ENCODE measurements at regions of chr12 and their contacts with region 1.

Region 1: DNA sequence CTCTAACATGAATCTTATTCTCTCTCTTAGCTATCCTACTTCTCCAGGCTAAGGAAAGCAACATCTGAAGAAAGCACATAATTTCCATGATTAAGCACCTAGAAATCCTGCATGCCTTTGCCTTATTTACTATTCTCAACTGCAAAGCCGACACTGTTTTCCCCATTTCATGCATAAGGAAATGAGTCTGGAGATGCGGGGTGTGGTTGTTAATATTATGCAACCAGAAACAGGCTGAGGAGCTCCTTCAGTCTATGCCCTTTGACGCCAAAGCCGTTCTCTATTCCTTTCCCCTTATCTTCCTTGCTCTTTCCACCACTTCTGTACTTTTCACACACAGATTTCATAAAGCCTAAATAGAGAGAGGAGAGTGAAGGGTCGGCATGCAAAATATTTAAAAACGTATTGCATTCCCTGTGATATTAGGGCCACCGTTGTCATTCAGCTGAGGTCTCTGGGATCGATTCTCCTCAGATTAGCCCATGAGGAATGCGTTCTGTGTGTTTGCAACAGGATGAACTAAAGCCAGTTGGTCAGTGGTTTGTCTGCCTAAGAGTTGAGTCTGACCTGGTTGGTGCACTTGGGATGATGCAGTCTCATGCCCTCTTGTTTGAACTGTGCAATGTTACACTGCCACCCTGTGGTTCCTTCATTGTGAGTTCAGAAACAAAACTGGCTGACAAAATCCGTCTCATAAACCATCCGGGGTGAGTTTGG is 53.1 kb upstream of the PLEKHG7 start:
- DNase-seq: peak; percentile 75
- H3K4me3 Mint-ChIP-seq: no peak overlapping the region
- H3K27ac Mint-ChIP-seq: no peak overlapping the region
- H3K4me1 Mint-ChIP-seq: peaks cover 7% of the 10 kb centered on the region
- H3K27me3 Mint-ChIP-seq: peaks cover 2% of the 10 kb centered on the region

Region 2: GRCh38 chr12:91361864-91362263 is 1287.8 kb before region 1 on chr12:
- CTCF ChIA-PET with region 1: no interaction called
- intact Hi-C with region 1: loop called (anchors 1 kb)
- DNase-seq: no peak
- H3K4me3 Mint-ChIP-seq: no peak overlapping the region
- H3K27ac Mint-ChIP-seq: no peak overlapping the region
- H3K4me1 Mint-ChIP-seq: peaks cover 3% of the 10 kb centered on the region
- H3K27me3 Mint-ChIP-seq: no peaks in the 10 kb centered on the region

Region 3: DNA sequence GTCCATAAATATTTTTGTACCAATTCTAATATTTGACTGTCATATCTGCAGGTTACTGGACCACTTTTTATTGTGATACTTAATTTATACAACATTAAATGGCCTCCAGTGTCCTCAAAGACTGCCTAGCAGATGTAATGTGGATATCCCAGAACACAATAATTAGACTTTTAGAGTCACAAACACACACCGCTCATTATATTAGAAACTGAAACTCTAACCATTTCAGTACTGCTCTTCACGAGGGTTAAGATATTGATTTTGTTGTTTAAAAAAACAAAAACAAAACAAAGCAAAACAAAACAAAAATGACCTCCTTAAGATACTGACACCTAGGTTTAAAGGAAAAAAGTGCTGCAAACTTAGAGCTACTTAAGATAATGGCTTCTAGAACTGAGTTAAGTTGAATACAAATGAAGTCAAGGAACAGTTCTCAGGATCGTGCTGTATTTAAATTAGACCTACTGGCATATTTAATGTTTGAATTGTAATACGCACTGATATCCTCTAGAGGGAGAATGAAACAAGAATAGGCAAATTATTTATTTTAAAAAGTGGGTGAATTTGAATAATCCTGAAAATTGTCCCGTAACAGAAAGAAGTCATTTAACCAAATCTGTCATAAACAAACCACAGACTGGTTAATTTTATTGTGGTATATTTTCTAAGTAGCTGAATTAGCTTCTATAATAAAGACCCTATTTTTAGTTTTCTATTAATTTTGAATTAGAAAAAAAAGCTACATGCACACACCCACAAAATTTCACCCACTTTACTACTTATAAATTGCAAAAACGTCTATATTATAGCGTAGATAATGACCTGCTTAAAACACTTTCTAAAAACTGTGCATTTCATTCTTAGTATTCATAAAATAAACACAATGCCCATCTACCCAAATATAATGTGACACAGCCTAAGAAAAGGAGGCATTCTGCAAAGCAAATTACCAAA is 1071.8 kb before region 1 on chr12:
- CTCF ChIA-PET with region 1: no interaction called
- intact Hi-C with region 1: loop called (anchors 10 kb)
- DNase-seq: no peak
- H3K4me3 Mint-ChIP-seq: peak overlapping the region; percentile 71
- H3K27ac Mint-ChIP-seq: peak overlapping the region; percentile 61
- H3K4me1 Mint-ChIP-seq: peaks cover 19% of the 10 kb centered on the region
- H3K27me3 Mint-ChIP-seq: no peaks in the 10 kb centered on the region

Region 4: GRCh38 chr12:92272061-92272964 is 377.4 kb before region 1 on chr12:
- CTCF ChIA-PET with region 1: no interaction called
- intact Hi-C with region 1: no loop called
- DNase-seq: no peak
- H3K4me3 Mint-ChIP-seq: no peak overlapping the region
- H3K27ac Mint-ChIP-seq: no peak overlapping the region
- H3K4me1 Mint-ChIP-seq: peaks cover 11% of the 10 kb centered on the region
- H3K27me3 Mint-ChIP-seq: no peaks in the 10 kb centered on the region

Region 5: DNA sequence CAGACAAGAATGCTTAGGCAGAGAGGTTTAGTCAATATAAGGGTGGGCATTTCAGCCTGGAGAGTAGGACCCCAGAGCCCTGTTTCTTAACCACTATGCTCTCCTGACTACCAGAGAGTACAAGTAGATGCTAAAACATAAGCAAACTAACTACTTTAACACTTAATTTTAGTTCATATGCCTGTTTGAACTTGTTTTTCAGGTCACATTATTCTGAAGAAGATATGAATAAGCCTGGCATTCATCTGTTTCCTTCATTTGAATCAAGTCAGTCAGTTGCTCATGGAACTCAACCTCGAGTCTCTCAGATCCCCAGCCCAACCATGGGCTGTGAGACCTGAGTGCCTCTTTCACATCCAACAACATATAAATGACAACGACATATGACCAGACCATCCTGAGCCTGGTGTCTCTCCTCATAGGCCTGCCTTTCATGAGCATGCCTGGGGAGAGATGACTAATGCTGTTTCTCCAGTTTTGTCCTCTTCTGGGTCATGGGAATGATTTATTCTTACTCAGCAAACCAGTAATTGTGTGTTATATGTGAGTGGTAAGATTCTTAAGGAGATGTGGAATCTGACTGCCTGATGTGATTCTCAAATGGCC is 252.9 kb before region 1 on chr12:
- CTCF ChIA-PET with region 1: no interaction called
- intact Hi-C with region 1: loop called (anchors 1 kb)
- DNase-seq: peak; percentile 39
- H3K4me3 Mint-ChIP-seq: no peak overlapping the region
- H3K27ac Mint-ChIP-seq: peak overlapping the region; percentile 73
- H3K4me1 Mint-ChIP-seq: peaks cover 97% of the 10 kb centered on the region
- H3K27me3 Mint-ChIP-seq: no peaks in the 10 kb centered on the region

Region 6: DNA sequence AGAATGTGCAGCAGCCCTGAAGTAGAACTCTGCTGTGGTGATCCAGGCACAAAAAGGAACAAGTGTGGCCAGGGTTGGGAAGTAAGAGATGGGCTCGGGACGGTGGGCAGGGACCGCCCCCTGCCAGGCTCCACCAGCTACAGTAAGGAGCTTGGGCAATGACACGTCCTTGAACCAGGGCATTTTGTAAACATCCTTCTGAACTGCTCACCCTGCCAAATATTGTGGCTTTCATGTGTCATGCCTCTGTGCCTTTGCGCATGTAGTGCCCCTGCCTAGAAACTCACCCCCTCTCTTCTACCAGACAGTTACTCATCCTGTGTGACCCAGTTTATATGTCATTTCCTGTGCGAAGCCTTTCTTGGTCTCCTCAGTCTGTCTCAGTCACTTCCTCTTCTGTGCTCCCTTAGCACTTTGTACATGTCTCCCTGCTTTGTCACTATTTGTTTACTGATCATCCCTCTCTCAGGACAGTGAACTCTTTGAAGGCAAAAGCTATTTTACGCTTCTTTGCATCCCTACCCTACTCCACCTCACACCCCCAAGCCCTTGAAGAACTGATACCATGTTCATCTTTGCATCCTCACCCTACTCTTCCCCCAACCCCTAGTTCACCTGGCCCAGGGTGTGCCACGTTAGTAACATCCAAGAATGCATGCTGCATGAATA is 55.8 kb before region 1 on chr12:
- CTCF ChIA-PET with region 1: interaction called, 3 read pairs
- intact Hi-C with region 1: loop called (anchors 5 kb)
- DNase-seq: peak; percentile 87
- H3K4me3 Mint-ChIP-seq: peak overlapping the region; percentile 55
- H3K27ac Mint-ChIP-seq: peak overlapping the region; percentile 96
- H3K4me1 Mint-ChIP-seq: peaks cover 78% of the 10 kb centered on the region
- H3K27me3 Mint-ChIP-seq: no peaks in the 10 kb centered on the region

Region 7: DNA sequence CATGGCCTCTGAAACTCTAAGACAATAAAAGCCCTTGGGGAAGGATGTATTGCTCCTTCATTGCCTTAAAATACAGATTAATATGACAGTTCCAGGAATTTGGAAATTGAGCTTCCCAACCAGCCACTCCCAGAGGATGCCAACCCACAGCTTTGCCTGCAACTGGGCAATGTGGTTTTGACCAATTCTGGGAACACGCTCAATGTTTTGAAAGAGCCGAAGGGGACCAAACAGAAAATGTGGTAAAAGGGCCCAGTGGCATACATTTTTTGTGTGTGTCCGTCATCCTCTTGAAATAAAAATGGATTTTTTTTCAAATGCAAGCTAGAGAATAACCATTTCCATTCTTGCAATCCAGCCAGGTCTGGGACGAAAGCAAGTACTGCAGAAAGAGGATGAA is 35.2 kb before region 1 on chr12:
- CTCF ChIA-PET with region 1: no interaction called
- intact Hi-C with region 1: loop called (anchors 2 kb)
- DNase-seq: no peak
- H3K4me3 Mint-ChIP-seq: no peak overlapping the region
- H3K27ac Mint-ChIP-seq: no peak overlapping the region
- H3K4me1 Mint-ChIP-seq: peaks cover 10% of the 10 kb centered on the region
- H3K27me3 Mint-ChIP-seq: no peaks in the 10 kb centered on the region

Region 8: GRCh38 chr12:92871116-92871515 is 221.4 kb after region 1 on chr12:
- CTCF ChIA-PET with region 1: no interaction called
- intact Hi-C with region 1: no loop called
- DNase-seq: no peak
- H3K4me3 Mint-ChIP-seq: no peak overlapping the region
- H3K27ac Mint-ChIP-seq: no peak overlapping the region
- H3K4me1 Mint-ChIP-seq: peaks cover 15% of the 10 kb centered on the region
- H3K27me3 Mint-ChIP-seq: no peaks in the 10 kb centered on the region

Measured in activated naive CD4-positive, alpha-beta T cell treated with anti-CD3 and anti-CD28 coated beads for 36 hours (primary cell).